ENCODE measurements at regions of chr17 and their contacts with region 1.

Region 1: DNA sequence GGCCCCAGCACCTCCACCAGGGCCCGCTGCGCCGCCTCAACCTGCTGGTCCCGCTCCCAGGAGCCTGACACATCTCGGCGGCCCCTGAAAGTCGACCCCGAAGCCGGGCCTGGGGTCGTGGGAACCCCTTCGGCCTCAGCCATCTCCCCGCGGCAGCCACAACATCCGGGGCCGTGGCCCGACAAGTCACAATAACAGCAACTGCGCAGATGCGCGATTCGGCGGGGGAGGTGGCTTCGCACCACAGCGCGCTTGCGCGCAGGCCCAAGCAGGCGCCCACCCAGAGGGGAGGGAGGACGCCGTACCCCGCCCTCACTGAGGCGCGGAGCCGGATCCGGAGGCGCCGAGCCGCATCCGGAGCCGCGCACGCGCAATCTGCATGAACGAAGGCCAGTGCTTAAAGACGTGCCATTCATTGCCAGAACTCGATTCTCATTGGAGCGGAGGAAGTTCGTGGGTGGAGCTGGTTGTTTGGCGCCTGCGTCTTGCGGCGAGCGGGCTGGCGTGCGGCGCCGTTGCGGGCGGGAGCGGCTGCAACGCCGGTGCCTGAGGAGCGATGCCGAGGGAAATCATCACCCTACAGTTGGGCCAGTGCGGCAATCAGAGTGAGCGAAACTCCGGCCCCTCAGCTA is at the starts of genes RETREG3 and TUBG1:
- DNase-seq: peak; percentile 100
- ATAC-seq: peak; percentile 92
- H3K4me3 Mint-ChIP-seq: peak within 1 kb of the TSS; percentile 95
- H3K27ac Mint-ChIP-seq: peak within 1 kb of the TSS; percentile 97
- H3K4me1 Mint-ChIP-seq: peaks cover 35% of the 10 kb centered on the region
- H3K27me3 Mint-ChIP-seq: no peaks in the 10 kb centered on the region
- total RNA-seq, gene RETREG3: 28.3 to 30.9 TPM
- total RNA-seq, gene TUBG1: 76.1 to 102 TPM

Region 2: DNA sequence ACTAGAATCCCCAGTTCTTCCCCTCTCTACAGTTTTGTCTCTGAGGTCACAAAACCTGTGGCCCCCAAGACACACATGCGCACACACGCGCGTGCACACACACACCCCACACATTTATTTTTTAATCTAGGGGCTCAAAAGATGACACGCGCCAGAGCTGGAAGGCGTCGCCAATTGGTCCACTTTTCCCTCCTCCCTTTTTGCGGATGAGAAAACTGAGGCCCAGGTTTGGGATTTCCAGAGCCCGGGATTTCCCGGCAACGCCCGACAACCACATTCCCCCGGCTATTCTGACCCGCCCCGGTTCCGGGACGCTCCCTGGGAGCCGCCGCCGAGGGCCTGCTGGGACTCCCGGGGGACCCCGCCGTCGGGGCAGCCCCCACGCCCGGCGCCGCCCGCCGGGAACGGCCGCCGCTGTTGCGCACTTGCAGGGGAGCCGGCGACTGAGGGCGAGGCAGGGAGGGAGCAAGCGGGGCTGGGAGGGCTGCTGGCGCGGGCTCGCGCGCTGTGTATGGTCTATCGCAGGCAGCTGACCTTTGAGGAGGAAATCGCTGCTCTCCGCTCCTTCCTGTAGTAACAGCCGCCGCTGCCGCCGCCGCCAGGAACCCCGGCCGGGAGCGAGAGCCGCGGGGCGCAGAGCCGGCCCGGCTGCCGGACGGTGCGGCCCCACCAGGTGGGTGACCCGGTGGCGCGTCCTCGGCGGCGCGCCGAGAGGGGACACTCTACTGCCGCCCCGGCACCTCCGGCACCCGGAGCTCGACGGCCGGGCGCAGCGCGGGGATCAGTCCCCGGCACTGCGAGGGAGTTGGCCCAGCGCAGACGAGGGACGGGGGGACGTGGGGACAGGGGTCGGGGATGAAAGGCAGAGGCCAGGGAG is 321.1 kb before region 1 on chr17 and contains the start of gene STAT5A:
- CTCF ChIA-PET with region 1: no interaction called
- POLR2A ChIA-PET with region 1: no interaction called
- intact Hi-C with region 1: loop called in 1 of 2 experiments (anchors 5 kb)
- DNase-seq: peak; percentile 90
- ATAC-seq: peak; percentile 65
- H3K4me3 Mint-ChIP-seq: peak within 1 kb of the TSS; percentile 81
- H3K27ac Mint-ChIP-seq: peak within 1 kb of the TSS; percentile 96
- H3K4me1 Mint-ChIP-seq: peaks cover 63% of the 10 kb centered on the region
- H3K27me3 Mint-ChIP-seq: no peaks in the 10 kb centered on the region
- total RNA-seq, gene STAT5A: 178 to 203 TPM

Region 3: DNA sequence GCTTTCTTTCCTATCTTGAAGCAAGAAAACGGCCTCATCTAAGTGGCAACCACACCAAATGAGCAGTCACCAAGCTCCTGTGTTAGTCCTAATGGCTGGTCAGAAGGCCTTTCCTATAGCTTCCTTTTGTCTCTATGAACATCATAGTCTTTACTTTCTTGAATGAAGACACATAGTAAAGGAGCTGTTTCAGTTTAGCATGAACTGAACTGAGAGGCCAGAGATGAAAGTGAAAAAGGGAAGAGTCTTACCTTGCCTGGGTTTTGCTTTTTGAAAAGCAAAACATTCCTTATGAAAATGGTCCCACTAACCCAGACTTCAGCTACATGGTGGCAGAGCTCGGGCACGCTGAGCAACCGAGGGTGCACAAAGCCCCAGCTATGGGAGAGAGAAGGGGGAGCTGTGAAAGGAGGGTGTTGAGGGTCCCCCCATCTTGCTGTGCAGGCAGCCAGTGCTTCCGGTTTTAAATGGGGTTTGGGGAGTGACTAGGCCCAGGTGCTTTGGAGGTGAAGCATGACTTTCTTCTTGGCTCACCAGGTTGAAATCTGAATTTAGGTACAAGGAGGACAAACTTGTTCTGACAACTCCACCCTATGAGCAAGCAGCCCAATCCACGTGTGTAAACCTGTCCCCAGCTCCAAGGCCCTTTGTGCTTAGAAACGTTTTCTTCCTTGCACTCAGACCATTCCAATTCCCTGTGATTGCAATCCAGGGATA is 22.6 kb before region 1 on chr17:
- CTCF ChIA-PET with region 1: interaction called, 5 read pairs
- POLR2A ChIA-PET with region 1: interaction called, 10 read pairs
- intact Hi-C with region 1: no loop called
- DNase-seq: no peak
- ATAC-seq: no peak
- H3K4me3 Mint-ChIP-seq: no peak overlapping the region
- H3K27ac Mint-ChIP-seq: peak overlapping the region; percentile 34
- H3K4me1 Mint-ChIP-seq: peaks cover 2% of the 10 kb centered on the region
- H3K27me3 Mint-ChIP-seq: no peaks in the 10 kb centered on the region

Region 4: GRCh38 chr17:42744806-42745617 is 135.7 kb after region 1 on chr17 and contains the start of gene EZH1:
- CTCF ChIA-PET with region 1: no interaction called
- POLR2A ChIA-PET with region 1: no interaction called
- intact Hi-C with region 1: loop called (anchors 1 kb)
- DNase-seq: peak; percentile 96
- ATAC-seq: peak; percentile 91
- H3K4me3 Mint-ChIP-seq: peak within 1 kb of the TSS; percentile 89
- H3K27ac Mint-ChIP-seq: peak within 1 kb of the TSS; percentile 98
- H3K4me1 Mint-ChIP-seq: peaks cover 19% of the 10 kb centered on the region
- H3K27me3 Mint-ChIP-seq: peaks cover 7% of the 10 kb centered on the region
- total RNA-seq, gene EZH1: 28.6 to 29.5 TPM

Region 5: DNA sequence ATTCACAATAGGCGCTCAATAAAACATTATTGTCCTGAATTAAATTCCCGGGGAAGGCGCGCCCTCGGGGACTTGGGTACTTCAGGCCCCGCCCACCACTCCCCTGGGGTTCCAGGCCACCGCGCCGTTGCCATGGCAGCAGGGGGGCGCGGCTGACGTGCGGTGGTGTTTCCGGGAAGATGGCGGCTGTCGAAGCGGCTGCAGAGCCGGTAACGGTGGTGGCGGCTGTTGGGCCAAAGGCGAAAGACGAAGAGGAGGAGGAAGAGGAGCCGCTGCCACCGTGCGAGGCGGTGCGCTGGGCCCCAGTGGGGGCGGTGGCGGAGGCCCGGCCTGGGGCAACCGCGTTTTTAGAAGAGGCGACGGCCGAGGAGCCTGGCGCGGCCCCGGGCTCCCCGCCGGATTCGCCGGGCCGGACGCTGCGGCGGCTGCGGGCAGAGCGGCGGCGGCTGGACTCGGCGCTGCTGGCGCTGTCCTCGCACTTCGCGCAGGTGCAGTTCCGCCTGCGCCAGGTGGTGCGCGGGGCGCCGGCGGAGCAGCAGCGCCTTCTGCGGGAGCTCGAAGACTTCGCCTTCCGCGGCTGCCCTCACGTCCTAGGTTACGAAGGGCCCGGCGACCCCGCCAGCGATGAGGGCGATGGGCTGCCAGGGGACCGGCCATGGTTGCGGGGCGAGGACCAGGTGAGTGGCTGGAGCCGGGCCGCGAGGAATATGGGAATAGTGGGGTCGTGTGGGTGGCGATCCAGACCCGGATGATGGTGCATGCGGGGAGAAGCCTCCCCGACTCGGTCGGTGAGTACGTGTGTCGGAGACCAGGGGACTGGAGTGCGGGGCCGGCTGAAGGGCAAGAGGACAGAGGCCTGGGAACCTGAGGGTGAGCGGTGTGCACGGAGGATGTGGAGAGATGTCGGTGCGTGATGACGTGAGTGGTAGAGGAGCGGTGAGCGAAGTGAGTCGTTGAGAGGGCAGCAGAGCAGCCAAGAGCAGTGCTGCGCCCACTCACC is 371.4 kb after region 1 on chr17 and contains the start of gene RUNDC1:
- CTCF ChIA-PET with region 1: no interaction called
- POLR2A ChIA-PET with region 1: no interaction called
- intact Hi-C with region 1: loop called in 1 of 2 experiments (anchors 1 kb)
- DNase-seq: peak; percentile 95
- ATAC-seq: peak; percentile 87
- H3K4me3 Mint-ChIP-seq: peak within 1 kb of the TSS; percentile 99
- H3K27ac Mint-ChIP-seq: peak within 1 kb of the TSS; percentile 98
- H3K4me1 Mint-ChIP-seq: peaks cover 32% of the 10 kb centered on the region
- H3K27me3 Mint-ChIP-seq: no peaks in the 10 kb centered on the region
- total RNA-seq, gene RUNDC1: 12.3 to 12.5 TPM